ENCODE measurements at regions of chr22 and their contacts with region 1.

Region 1: GRCh38 chr22:31530823-31531195 is 34.5 kb downstream of the SFI1 start:
- DNase-seq: no peak
- H3K4me3 ChIP-seq: no peak overlapping the region
- H3K27ac ChIP-seq: no peak overlapping the region
- H3K4me1 ChIP-seq: no peaks in the 10 kb centered on the region
- H3K27me3 ChIP-seq: no peaks in the 10 kb centered on the region
- CTCF ChIP-seq: no peak

Region 2: DNA sequence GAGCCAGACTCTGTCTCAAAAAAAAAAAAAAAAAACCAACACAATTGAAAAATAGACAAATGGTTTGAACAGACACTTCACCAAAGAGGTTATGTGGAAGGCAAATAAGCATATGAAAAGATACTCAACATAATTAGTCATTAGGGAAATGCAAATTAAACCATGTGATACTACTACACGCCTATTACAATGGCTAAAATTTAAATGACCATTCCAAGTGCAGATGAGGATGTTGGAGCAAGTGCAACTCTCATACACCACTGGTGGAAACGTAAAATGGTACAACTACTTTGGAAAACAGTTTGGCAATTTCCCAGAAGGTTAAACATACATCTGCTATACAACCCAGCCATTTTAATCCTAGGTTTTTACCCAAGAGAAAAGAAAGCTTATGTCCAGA is 65.5 kb before region 1 on chr22:
- CTCF ChIA-PET with region 1: no interaction called
- POLR2A ChIA-PET with region 1: interaction called, 11 read pairs
- intact Hi-C with region 1: no loop called
- DNase-seq: no peak
- H3K4me3 ChIP-seq: no peak overlapping the region
- H3K27ac ChIP-seq: no peak overlapping the region
- H3K4me1 ChIP-seq: no peaks in the 10 kb centered on the region
- H3K27me3 ChIP-seq: no peaks in the 10 kb centered on the region
- CTCF ChIP-seq: no peak

Region 3: GRCh38 chr22:33221568-33221967 is 1690.8 kb after region 1 on chr22:
- CTCF ChIA-PET with region 1: no interaction called
- POLR2A ChIA-PET with region 1: no interaction called
- intact Hi-C with region 1: no loop called
- DNase-seq: no peak
- H3K4me3 ChIP-seq: no peak overlapping the region
- H3K27ac ChIP-seq: no peak overlapping the region
- H3K4me1 ChIP-seq: no peaks in the 10 kb centered on the region
- H3K27me3 ChIP-seq: peaks cover 84% of the 10 kb centered on the region
- CTCF ChIP-seq: no peak